Activated CD4-positive, alpha-beta T cell treated with anti-CD3 and anti-CD28 coated beads, Interleukin-2, amount 10 ng/mL, durations not matched to agents 7 days and 5 days (primary cell): ENCODE measurements at regions of chr12 and their contacts with region 1.

Region 1: GRCh38 chr12:120055231-120056021 is 61.1 kb downstream of the RAB35 start:
- DNase-seq: no peak
- H3K4me3 Mint-ChIP-seq: no peak overlapping the region
- H3K27ac Mint-ChIP-seq: no peak overlapping the region
- H3K4me1 Mint-ChIP-seq: peaks cover 17% of the 10 kb centered on the region
- H3K27me3 Mint-ChIP-seq: no peaks in the 10 kb centered on the region

Region 2: DNA sequence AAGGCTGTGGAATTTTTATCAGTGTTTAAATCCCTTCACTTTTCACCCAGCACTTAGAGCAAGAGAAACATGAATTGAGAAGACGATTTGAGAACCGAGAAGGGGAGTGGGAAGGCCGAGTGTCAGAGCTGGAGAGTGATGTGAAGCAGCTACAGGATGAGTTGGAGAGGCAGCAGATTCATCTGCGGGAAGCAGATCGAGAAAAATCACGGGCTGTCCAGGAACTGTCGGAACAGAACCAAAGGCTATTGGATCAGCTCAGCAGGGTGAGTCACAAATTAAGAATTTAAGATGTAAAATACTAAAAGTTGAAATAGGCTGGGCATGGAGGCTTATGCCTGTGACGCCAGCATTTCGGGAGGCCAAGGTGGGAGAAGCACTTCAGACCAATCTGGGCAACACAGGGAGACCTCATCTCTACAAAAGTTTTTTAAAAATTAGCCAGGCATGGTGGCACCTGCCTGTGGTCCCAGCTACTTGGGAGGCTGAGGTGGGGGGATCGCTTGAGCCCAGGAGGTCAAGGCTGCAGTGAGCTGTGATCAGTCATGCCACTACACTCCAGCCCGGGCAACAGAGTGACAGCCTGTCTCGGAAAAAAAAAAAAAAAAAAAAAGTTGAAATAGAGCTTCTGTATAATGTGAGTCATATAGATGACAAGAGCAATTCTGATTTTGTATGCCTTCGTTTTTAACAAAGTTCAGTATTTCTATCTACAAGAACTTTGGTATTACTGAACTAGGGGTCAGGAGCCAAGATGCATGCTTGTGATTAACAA is 56.8 kb before region 1 on chr12:
- CTCF ChIA-PET with region 1: interaction called, 10 read pairs
- POLR2A ChIA-PET with region 1: no interaction called
- DNase-seq: no peak
- H3K4me3 Mint-ChIP-seq: no peak overlapping the region
- H3K27ac Mint-ChIP-seq: no peak overlapping the region
- H3K4me1 Mint-ChIP-seq: peaks cover 27% of the 10 kb centered on the region
- H3K27me3 Mint-ChIP-seq: no peaks in the 10 kb centered on the region

Region 3: GRCh38 chr12:120039711-120040110 is 15.7 kb before region 1 on chr12:
- CTCF ChIA-PET with region 1: no interaction called
- POLR2A ChIA-PET with region 1: no interaction called
- DNase-seq: no peak
- H3K4me3 Mint-ChIP-seq: no peak overlapping the region
- H3K27ac Mint-ChIP-seq: no peak overlapping the region
- H3K4me1 Mint-ChIP-seq: peaks cover 14% of the 10 kb centered on the region
- H3K27me3 Mint-ChIP-seq: no peaks in the 10 kb centered on the region